Sciatic nerve (tissue), 2 donors: ENCODE measurements at regions of chr7 and their contacts with region 1.

Region 1: DNA sequence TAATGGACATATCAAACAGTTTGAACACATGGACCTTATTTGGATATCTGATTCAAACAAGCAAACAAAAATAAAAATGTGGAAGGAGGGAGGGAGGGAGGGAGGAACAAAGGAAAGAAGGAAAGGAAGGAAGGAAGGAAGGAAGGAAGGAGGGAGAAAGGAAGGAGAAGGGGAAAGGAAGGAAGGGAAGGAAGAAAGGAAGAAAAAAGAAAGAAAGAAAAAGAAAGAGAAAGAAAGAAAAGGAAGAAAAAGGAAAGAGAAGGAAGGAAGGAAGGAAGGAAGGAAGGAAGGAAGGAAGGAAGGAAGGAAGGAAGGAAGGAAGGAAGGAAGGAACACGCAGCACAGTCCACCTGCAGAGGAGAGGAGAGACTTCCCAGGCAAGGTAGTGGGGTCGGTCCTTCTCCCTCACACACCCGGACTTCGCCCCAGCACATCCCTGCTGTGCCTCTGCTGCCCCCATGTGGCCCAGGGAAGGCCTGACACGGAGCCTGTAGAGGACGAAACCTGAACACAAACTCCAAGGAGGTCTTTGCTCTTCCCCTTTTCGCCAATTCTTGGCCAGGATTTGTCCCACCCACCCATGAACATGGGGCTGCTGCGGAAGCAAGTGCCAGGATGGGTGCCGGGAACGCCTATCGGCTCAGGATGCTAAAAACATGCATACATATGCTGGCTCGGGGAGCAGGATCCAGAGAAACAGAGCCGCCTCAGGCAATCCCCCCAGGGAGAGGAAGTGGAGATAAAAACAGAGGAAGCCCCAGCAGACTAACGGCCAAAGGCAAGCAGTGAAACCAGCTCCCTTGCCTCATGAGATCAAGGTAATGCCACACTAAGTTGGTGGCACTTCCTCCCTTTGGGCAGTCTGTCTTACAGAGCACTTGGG is 52.3 kb upstream of the DGKI start:
- DNase-seq: peak; percentile 90
- ATAC-seq: peak; percentile 93

Region 2: DNA sequence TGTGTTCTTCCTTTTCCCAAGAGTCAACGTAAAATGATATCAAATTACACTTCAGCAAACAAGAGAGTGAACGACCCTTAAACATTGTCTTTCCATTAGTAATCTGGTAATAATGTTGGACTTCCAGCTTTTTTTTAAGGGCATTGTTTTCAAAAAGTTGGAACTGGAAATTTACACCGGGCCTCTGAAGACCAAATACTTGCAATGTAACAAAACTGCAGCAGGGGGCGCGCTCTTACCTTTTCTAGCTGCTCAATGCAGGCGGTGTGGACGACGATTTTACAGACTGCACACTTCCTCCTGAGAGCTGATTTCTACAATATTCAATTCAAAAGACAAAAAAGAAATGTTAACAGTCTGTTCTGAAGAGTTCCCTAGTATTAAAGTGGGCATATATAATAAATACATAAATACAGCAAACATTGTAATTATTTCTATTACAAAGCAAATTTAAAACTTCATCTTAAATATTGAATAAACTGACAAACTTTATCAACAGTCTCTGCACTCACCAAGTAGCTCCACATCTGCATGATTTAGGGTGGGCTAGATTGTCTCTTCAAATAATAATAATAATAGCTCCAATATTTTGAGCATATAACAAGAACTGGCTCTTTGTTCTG is 242.7 kb before region 1 on chr7:
- intact Hi-C with region 1: loop called (anchors 10 kb)
- DNase-seq: peak; percentile 90
- ATAC-seq: peak; percentile 85

Region 3: DNA sequence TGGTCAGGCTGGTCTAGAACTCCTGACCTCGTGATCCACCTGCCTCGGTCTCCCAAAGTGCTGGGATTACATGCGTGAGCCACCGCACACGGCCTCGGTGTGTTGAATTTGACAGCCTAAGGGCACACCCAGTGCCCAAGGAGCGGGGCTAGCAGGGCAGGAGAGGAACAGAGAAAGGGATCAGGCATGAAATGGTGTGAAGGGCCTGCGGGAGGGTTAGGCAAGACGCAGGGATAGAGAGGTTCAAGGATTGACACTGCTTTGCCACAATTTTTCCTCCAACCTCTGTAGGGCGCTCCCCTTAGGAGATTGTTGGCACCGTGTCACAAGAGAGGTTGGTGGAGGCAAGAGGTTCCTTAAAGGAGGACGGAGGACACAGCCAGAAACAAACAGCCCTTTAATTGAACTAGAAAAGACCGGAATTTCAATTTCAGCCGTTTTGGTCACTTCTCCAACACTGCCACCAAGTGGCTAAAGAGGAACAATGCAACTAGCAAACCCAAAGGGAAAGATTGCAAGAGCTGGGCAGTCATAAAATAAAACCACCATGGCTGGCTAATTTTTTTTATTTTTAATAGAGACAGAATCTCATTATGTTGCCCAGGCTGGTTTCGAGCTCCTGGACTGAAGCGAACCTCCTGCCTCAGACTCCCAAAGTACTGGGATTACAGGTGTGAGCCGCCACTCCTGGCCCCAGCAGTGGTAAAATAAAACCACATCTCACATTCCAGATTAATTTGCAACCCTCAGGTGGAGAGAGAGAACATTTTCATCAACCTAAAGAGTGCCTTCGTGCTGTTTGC is 109.7 kb after region 1 on chr7:
- intact Hi-C with region 1: loop called (anchors 2 kb)
- DNase-seq: no peak
- ATAC-seq: peak; percentile 89